ENCODE measurements at regions of chr2 and their contacts with region 1.

Region 1: GRCh38 chr2:5926871-5927512 is 234.8 kb downstream of the SOX11 start:
- DNase-seq: peak in 1 of 10 donors; percentile 33
- H3K4me3 ChIP-seq: peak overlapping the region in 35 of 59 donors; percentile 0 to 56 (median 27)
- H3K27ac ChIP-seq: peak overlapping the region in 54 of 59 donors; percentile 16 to 85 (median 71)
- H3K27me3 ChIP-seq: peaks cover 0 to 8% (median 0%) of the 10 kb centered on the region in 45 donors
- CTCF ChIP-seq: peak in 3 of 56 donors; percentile 13 to 27 (median 21)

Region 2: GRCh38 chr2:5969303-5969702 is 42.3 kb after region 1 on chr2:
- intact Hi-C with region 1: no loop called
- DNase-seq: no peak
- H3K4me3 ChIP-seq: no peak overlapping the region
- H3K27ac ChIP-seq: peak overlapping the region in 1 of 59 donors; percentile 41
- H3K27me3 ChIP-seq: no peaks in the 10 kb centered on the region
- CTCF ChIP-seq: no peak

Region 3: GRCh38 chr2:6080932-6081753 is 154.2 kb after region 1 on chr2:
- intact Hi-C with region 1: loop called (anchors 2 kb)
- DNase-seq: peak in 6 of 10 donors; percentile 10 to 60 (median 49)
- H3K4me3 ChIP-seq: peak overlapping the region in 57 of 59 donors; percentile 10 to 64 (median 42)
- H3K27ac ChIP-seq: peak overlapping the region; percentile 41 to 96 (median 87)
- H3K27me3 ChIP-seq: peaks cover 0 to 8% (median 0%) of the 10 kb centered on the region in 45 donors
- CTCF ChIP-seq: peak in 5 of 56 donors; percentile 7 to 24 (median 10)